ENCODE measurements at regions of chr17 and their contacts with region 1.

Region 1: DNA sequence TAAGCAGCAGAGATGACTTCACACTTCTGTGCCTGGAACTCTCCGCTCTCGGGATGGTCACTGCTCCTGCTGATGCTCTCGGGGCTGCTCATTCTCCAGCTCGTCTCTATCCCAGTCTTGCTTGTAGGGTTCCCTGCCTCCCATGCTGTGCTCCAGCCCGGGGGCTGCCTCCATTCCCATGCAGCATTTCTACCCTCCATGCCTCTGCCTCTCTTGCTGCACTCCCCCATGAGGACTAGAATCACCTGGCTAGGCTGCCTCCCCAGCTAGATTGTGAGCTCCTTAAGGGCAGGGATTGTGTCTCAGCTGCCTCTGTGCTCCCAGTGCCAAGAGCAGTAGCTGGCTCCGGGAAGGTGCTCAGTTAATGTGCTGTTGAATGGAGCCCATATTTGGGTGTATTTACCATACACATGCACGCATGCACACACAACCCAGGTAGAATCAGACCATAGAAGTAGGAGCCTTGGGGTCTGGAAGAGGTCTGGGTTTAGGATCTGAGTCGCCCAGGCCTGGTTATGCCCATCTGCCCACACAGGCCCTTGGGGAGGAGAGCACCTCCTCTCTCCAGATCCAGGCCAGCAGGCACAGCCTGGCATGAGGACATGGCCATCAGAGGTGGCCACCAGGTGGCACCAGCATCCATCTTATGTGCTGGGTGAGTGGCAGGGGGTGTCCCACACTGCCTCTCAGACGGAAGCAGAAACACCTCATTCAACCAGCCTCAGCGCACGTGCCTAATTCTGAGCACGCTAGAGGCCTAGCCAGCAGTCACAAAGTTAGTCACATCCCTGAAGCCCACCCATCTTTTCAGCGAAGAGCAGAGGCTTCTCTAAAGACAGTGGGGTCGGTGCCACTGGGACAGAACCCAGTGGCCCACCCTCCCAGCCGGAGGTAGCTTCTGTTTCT is 9.3 kb downstream of the GIT1 start:
- DNase-seq: peak; percentile 96
- H3K4me3 ChIP-seq: peak overlapping the region in 1 of 2 experiments; percentile 32; a peak in 1 of 4 replicates
- H3K27ac ChIP-seq: peak overlapping the region in 1 of 2 experiments; percentile 53; a peak in 2 of 4 replicates
- H3K4me1 ChIP-seq: peaks cover 2 to 17% of the 10 kb centered on the region in 2 experiments; a peak in 2 of 4 replicates
- H3K27me3 ChIP-seq: no peaks in the 10 kb centered on the region
- CTCF ChIP-seq: peak; percentile 85
- EP300 ChIP-seq: no peak
- RAD21 ChIP-seq: peak; percentile 92

Region 2: DNA sequence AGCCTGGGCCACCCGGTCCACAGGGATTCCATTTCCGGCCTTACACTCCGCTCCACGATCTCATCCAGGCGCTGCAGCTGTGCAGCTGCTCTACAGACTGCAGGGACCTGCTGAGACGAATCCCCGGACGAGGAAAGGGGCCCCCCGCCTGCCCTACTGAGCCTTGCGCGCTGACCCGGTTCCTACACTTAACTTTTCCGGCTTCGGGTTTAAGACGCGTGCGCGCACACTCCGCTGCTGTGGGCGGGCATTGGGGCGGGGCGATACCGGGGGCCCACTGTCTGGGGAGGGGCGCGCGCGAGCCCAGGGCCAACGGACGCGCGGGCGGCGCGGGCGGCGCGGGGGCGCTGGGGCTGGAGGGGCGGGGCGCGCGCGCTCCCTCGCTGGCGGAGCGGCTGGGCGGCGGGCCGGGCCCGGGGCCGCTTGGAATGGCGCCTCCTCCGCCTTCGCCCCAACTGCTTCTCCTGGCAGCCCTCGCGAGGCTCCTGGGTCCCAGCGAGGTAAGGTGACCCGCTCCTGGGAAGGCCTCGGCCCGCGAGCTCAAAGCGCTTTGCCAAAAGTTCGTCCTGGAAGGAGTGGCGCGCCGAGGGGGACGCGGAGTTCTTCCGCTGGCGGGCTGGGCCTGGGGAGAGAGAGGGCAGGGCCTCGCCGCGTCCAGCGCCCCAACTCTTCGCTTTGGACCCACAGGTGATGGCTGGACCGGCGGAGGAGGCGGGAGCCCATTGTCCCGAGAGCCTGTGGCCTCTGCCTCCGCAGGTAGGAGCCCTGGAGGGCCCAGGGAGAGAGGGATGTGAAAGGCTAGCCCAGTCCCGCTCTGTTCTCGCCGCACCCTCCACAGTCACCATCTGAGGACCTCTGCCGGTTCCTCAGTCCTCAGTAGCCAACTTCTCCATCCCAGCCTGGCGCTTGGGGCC is 11.5 kb before region 1 on chr17 and contains the start of gene TP53I13:
- CTCF ChIA-PET with region 1: interaction called, 166 read pairs
- POLR2A ChIA-PET with region 1: no interaction called
- DNase-seq: peak; percentile 96
- H3K4me3 ChIP-seq: peak within 1 kb of the TSS; percentile 76 to 85
- H3K27ac ChIP-seq: peak within 1 kb of the TSS; percentile 77 to 89
- H3K4me1 ChIP-seq: peaks cover 8 to 27% of the 10 kb centered on the region in 2 experiments; a peak in 1 of 4 replicates
- H3K27me3 ChIP-seq: no peaks in the 10 kb centered on the region
- CTCF ChIP-seq: no peak
- EP300 ChIP-seq: no peak
- RAD21 ChIP-seq: no peak
- polyA plus RNA-seq, gene TP53I13: 39.2 and 45.3 TPM in 2 replicates

Region 3: DNA sequence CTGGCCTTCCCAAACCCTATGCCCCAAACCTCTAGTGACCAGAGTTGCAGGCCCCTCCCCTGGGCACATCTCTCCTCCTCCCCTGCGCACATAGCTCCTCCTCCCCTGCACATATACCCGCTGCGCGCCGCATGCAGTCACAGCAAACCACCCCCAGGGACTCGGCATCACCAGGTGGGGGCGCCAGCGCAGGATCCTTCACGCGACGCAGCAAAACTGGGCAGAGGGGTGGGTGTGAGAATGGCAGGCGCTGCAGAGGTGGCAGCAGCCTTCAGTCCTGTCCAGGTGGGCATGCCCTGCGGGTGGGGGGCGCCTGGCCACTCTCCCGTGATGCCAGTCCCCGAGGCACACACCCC is 37.0 kb after region 1 on chr17:
- CTCF ChIA-PET with region 1: interaction called, 10 read pairs
- POLR2A ChIA-PET with region 1: no interaction called
- DNase-seq: peak; percentile 88
- H3K4me3 ChIP-seq: no peak overlapping the region
- H3K27ac ChIP-seq: no peak overlapping the region; a peak in 1 of 4 replicates
- H3K4me1 ChIP-seq: peaks cover 20 to 44% of the 10 kb centered on the region in 2 experiments; a peak in 3 of 4 replicates
- H3K27me3 ChIP-seq: no peaks in the 10 kb centered on the region
- CTCF ChIP-seq: peak; percentile 47
- EP300 ChIP-seq: no peak
- RAD21 ChIP-seq: peak; percentile 31

Measured in SK-N-SH (cell line).